Activated T-helper 1 cell treated with anti-CD3 and anti-CD28 coated beads, Interleukin-12 subunit alpha, Interleukin-12 subunit beta, Interleukin-2, Interleukin-4 antibody, amounts not matched to agents 30 ng/mL and 10 ng/mL and 1 ng/mL, durations not matched to agents 14 hours and 24 hours and 36 hours (primary cell): ENCODE measurements at regions of chr9 and their contacts with region 1.

Region 1: DNA sequence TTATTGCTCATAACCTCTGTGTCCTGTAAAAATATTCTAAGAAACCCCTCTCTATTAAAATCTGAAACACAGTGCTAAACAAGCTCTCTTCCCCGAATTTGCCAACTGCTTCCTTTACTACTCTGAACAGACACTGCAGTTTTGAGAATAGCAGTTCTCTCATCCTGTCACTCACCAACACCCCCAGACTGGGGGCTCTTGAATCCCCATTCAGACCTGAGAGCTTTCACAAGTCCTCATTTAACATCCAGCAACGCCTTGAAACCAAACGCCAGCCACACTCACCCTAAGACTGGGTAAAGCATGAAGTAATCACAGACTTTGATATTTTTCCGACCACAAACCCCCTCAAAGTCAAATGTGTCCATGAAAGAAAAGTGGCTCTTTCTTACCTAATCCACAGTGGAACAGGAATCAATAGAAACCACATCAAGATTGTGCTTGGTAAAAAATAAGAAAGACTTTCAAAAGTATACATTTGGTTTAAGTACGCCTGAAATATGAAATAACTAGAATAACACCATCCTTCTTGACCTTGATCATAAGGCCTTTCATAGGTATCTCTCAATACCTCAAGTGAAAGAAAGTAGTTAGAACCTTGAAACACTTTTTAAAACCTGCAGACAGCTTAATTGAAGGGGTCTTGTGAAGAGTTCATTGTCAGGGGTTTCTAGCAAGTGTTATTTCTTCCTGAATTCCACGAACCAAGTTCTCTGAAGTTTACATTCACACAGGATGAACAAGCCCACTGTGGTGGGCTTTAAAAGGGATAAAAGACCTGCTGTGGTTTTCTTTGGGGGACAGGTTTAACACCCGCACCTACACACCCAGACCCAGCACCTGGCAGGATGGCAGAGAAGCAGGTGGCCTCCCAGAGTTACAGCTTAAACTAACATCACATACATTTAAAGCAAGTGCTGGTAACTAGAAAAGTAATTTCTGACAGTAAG is 412.6 kb downstream of the MLLT3 start:
- DNase-seq: peak; percentile 62
- H3K4me3 Mint-ChIP-seq: peak overlapping the region; percentile 25
- H3K27ac Mint-ChIP-seq: peak overlapping the region; percentile 89
- H3K4me1 Mint-ChIP-seq: peaks cover 39% of the 10 kb centered on the region
- H3K27me3 Mint-ChIP-seq: no peaks in the 10 kb centered on the region

Region 2: DNA sequence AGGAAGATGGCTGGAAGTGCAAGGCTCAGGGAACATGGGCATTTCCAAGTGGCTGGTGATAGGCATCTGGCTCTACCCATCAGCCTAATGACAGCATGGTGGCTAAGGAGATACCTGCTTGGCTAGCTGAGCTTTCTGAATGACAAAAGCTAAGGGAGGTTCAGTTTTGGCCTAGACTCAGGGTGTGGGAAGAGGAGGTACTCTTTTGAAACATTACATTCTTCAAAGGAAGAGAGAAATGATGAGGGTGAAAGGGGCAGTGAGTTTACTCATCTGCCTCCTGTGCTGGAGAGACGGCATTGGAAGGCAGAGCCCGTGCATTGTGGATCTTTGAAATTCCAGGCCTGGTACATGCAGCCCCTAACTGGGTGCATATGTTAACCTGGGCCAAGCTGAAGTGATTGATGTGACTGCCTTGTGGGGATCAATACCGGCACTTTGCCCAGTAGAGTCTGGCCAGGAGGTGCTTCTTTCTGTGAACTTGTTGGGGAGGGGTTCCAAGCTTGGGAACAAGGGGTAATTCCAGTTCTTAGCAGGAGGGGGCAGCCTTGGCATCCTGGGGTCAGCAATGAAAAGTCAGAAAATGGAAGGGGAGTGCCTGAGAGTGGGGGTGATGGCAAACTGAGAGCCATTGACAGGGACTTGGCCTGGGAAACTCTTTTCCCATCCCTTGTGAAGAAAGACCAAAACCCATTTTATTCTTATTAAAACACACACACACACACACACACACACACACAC is 692.3 kb before region 1 on chr9:
- intact Hi-C with region 1: loop called (anchors 10 kb)
- DNase-seq: no peak
- H3K4me3 Mint-ChIP-seq: no peak overlapping the region
- H3K27ac Mint-ChIP-seq: no peak overlapping the region
- H3K4me1 Mint-ChIP-seq: peaks cover 27% of the 10 kb centered on the region
- H3K27me3 Mint-ChIP-seq: peaks cover under 1% of the 10 kb centered on the region

Region 3: GRCh38 chr9:19828576-19829109 is 381.0 kb before region 1 on chr9:
- intact Hi-C with region 1: no loop called
- DNase-seq: no peak
- H3K4me3 Mint-ChIP-seq: no peak overlapping the region
- H3K27ac Mint-ChIP-seq: no peak overlapping the region
- H3K4me1 Mint-ChIP-seq: no peaks in the 10 kb centered on the region
- H3K27me3 Mint-ChIP-seq: no peaks in the 10 kb centered on the region

Region 4: DNA sequence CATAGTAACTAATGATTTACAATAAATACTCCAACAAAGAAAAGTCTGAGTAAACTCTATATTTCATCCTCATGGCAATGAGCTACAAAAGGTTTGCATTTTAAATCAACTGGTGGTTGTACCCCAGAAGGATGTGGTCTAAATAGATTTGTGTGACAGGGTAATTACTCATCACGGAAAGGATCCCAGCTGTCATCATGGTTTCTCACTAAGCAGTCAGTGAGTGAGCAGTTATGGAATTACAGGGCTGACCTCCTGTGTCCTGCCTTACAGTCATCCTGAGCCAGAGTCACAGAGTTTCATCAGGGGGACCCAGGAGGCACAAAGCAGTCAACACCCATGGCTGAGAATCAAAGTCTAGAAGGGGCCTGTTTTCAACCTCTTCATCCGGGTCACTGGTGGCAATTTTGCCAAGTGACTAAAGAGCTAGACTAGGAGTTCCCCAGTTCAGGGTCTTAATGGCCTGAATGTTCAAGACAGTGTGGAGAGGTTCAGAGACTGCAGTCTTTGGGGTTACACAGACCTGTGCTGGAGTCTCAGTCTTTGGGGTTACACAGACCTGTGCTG is 210.1 kb before region 1 on chr9:
- intact Hi-C with region 1: loop called (anchors 1 kb)
- DNase-seq: peak; percentile 62
- H3K4me3 Mint-ChIP-seq: peak overlapping the region; percentile 63
- H3K27ac Mint-ChIP-seq: peak overlapping the region; percentile 99
- H3K4me1 Mint-ChIP-seq: peaks cover 66% of the 10 kb centered on the region
- H3K27me3 Mint-ChIP-seq: no peaks in the 10 kb centered on the region

Region 5: DNA sequence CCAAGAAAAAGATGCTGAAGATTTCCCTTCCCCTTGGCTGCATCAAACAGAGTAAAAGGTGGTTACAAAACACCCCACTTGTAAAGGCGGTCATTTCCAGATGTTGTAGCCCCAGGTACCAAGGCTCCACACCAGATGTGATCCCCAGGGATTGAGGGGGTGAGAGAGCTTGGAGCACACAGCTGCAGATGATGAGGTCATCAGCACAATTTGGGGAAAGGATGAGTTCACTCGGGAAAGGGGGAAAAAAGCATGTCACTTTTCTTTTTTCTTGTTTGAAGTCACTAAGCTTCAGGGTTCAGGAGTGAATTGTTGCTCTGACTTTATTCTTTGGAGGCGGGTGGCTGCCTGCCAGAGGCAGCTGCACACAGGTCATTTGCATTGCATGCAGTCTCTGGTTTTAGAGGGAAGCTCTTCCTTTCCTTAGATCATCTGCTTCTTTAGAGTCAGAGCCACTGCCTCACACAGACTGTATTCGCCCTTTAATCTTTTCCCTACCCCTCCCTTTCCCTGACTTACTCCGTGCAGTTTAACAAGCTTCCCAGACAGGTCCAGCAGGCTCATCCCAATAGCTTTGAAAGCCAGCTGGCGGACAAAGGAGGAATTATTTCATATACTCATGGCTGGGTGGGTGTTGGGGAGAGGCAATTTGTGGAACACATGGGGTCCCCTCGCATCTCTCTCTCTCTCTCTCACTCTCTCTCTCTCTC is 11.5 kb before region 1 on chr9:
- intact Hi-C with region 1: no loop called
- DNase-seq: no peak
- H3K4me3 Mint-ChIP-seq: no peak overlapping the region
- H3K27ac Mint-ChIP-seq: no peak overlapping the region
- H3K4me1 Mint-ChIP-seq: peaks cover 41% of the 10 kb centered on the region
- H3K27me3 Mint-ChIP-seq: peaks cover 4% of the 10 kb centered on the region

Region 6: DNA sequence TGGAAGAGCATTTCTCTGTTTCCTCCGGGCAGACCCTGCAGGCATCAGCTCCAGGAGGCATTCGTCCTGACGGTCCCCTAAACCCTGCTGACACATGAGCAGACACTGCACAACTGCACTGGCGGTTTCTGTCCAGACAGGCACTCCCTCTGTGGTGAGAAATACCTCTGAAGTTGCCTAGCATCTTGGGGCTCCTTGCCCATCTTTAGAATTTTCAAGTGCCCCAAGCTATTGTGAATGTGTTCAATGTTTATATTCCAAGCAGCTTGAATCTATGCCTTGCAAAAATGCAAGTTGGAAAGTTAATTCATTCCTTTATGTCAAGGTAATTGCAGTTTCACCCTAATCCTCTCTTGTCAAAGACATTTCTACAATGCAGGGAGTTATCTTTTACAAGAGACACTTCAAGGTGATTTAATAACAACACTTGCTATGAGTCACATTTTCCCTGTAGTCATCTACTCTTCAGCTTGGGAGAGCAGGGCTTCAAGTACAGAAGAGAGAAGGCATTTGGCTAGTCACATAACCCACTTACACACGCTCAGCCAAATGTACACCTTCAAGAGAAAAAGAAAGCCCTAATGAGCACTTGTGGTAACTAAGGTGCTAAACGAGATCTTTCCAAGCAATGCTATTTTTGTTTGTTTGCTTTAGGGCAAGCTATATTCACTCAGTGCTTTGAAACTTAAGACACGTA is 110.1 kb after region 1 on chr9:
- intact Hi-C with region 1: loop called (anchors 1 kb)
- DNase-seq: peak; percentile 37
- H3K4me3 Mint-ChIP-seq: peak overlapping the region; percentile 35
- H3K27ac Mint-ChIP-seq: peak overlapping the region; percentile 91
- H3K4me1 Mint-ChIP-seq: peaks cover 91% of the 10 kb centered on the region
- H3K27me3 Mint-ChIP-seq: no peaks in the 10 kb centered on the region

Region 7: DNA sequence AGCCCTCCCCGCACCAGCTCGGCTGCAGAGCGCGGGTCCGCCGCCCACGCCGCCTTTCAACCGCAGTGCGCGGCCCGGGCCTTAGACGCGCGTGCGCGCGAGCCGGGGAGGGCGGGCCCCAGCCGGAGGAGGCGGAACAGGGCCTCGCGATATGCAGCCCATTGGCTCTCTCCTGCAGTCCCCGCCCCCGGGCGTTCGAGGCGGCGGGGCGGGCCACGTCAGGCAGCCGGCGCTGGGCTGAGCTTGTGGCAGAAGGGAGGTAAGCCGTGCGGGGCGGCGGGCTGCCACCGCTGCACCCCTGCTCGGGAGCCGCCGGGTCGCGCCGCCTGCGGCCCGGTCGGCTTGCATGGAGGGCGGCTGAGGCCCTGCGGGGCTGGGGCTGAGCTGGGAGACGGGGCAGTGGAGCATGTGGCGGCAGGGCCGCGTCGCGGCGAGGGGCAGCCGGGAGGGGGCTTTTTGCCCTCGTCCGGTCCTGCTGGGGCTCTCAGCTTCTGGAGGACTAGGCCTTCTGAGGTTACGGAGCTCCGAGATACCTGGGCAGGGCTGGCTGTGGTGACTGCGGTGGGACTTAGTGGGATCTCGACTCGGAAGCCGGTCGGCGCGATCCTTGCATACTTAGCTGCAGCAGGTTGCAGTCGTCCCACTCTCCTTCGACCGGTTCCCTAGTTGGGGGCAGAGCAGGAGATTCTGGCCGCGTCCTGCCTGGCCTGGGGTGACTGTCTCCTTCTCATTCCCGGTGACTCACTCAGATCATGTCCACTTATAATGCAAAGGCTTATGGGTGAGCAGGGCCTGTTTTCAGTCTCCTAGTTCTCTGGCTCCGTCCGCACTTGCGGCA is 474.6 kb after region 1 on chr9 and contains the start of gene FOCAD:
- intact Hi-C with region 1: loop called (anchors 1 kb)
- DNase-seq: peak; percentile 96
- H3K4me3 Mint-ChIP-seq: peak within 1 kb of the TSS; percentile 89
- H3K27ac Mint-ChIP-seq: peak within 1 kb of the TSS; percentile 79
- H3K4me1 Mint-ChIP-seq: peaks cover 33% of the 10 kb centered on the region
- H3K27me3 Mint-ChIP-seq: no peaks in the 10 kb centered on the region
- total RNA-seq, gene FOCAD: 31.2 and 33.7 TPM in 2 replicates

Region 8: GRCh38 chr9:21096172-21096900 is 886.7 kb after region 1 on chr9:
- intact Hi-C with region 1: loop called (anchors 1 kb)
- DNase-seq: peak; percentile 38
- H3K4me3 Mint-ChIP-seq: peak overlapping the region; percentile 54
- H3K27ac Mint-ChIP-seq: peak overlapping the region; percentile 56
- H3K4me1 Mint-ChIP-seq: peaks cover 35% of the 10 kb centered on the region
- H3K27me3 Mint-ChIP-seq: no peaks in the 10 kb centered on the region